Calu3 (cell line): ENCODE measurements at regions of chr11 and their contacts with region 1.

Region 1: DNA sequence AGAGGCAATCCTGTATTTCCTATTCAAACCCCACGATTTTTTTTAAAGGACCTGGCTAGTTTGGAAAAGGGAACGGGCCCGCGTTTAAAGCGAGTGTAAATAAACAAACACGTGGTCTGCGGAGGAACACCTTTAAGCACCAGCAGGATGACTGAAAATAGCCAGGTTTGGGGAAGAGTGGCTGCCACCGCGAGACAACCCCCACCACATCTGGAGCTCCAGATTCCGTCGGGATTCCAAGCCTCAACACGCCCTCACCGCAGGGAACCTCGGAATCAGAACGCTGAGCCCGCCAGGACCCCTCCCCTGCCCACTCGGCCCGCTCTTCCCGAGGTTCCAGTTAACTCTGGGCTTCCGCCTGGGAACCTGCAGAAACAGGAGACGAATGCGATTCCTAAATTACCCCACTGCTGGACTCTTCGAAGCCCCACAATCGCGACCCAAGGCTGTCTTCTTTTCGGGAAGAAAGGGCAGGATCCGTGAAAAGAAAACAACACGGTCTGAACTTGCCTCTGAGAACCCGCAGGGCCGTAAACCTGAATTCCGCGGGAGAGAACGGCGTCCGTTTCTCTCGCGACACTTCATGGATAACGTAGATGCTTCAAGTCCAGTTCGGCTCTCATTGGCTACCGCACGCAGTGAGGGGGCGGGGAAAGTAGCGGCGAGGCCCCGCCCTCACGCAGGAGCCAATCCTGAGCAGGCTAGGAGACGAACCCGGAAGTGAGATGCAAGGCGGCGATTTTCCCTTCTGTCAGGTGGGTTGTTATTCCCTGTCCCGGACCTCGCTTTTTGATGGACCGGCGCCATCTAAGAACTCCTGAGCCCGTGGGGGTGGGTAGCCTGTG is at the starts of genes ANKRD49 and MRE11:
- DNase-seq: peak; percentile 93
- H3K4me3 Mint-ChIP-seq: peak within 1 kb of the TSS; percentile 81
- H3K27ac Mint-ChIP-seq: peak within 1 kb of the TSS; percentile 86
- H3K4me1 Mint-ChIP-seq: peaks cover 8% of the 10 kb centered on the region
- H3K27me3 Mint-ChIP-seq: no peaks in the 10 kb centered on the region
- CTCF ChIP-seq: no peak
- total RNA-seq, gene ANKRD49: 10.1 and 10.3 TPM in 2 replicates
- total RNA-seq, gene MRE11: 25.6 and 27.2 TPM in 2 replicates

Region 2: DNA sequence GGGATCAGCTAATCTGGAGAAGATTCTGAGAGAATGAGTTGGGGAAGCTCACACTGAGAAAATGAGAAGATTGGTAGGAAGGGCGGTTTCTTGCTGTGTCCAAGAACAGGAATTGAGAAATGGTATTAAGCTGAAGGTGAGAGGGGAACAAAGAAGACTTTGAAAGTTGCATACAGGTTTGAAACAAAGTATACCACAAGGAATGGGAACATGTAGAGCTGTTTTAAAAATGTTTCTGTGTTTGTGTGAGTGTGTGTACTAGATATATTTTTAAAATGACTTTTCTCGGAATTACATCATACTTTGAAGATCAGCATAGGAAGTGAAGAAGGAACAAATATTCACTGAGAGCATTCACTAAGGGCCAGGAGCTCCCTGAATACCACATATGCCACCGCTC is 213.5 kb before region 1 on chr11:
- CTCF ChIA-PET with region 1: no interaction called
- intact Hi-C with region 1: loop called (anchors 5 kb)
- DNase-seq: no peak
- H3K4me3 Mint-ChIP-seq: no peak overlapping the region
- H3K27ac Mint-ChIP-seq: no peak overlapping the region
- H3K4me1 Mint-ChIP-seq: no peaks in the 10 kb centered on the region
- H3K27me3 Mint-ChIP-seq: peaks cover 13% of the 10 kb centered on the region
- CTCF ChIP-seq: no peak

Region 3: GRCh38 chr11:94469416-94469815 is 24.1 kb before region 1 on chr11:
- CTCF ChIA-PET with region 1: no interaction called
- intact Hi-C with region 1: no loop called
- DNase-seq: no peak
- H3K4me3 Mint-ChIP-seq: no peak overlapping the region
- H3K27ac Mint-ChIP-seq: no peak overlapping the region
- H3K4me1 Mint-ChIP-seq: no peaks in the 10 kb centered on the region
- H3K27me3 Mint-ChIP-seq: no peaks in the 10 kb centered on the region
- CTCF ChIP-seq: no peak

Region 4: DNA sequence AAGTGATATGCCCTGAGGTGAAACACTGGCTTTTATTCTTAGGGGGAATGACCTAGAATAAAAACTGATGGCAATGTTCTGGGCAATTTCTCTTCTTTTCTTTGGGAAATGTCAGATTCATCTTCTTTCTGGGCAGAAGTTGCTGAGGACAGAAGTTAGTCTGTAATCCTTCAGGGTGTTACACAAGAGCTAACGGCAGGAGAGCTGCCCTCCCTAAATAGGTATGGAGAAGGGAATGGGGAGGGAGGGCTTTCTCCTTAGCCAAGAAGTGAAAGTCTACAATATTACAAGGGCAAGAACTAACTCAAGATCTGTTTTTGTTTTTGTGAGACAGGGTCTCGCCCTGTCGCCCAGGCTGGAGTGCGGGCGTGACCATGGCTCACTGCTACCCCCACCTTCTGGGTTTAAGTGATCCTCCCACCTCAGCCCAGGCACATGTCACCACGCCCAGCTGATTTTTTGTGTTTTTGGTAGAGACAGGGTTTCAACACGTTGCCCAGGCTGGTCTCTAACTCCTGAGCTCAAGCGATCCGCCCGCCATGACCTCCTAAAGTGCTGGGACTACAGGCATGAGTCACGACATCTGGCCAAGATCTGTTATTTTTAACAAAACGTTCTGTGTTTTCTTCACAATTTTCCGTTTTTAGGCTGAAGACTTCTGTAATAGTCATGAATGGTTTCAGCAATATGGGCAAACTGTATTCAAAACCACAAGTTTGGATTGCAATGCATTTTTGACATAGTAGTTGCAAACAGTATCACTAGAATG is 80.9 kb after region 1 on chr11:
- CTCF ChIA-PET with region 1: no interaction called
- intact Hi-C with region 1: no loop called
- DNase-seq: no peak
- H3K4me3 Mint-ChIP-seq: no peak overlapping the region
- H3K27ac Mint-ChIP-seq: no peak overlapping the region
- H3K4me1 Mint-ChIP-seq: no peaks in the 10 kb centered on the region
- H3K27me3 Mint-ChIP-seq: no peaks in the 10 kb centered on the region
- CTCF ChIP-seq: no peak